KBM-7 (cell line): ENCODE measurements at regions of chr17 and their contacts with region 1.

Region 1: GRCh38 chr17:62968445-62968923 is 2.4 kb downstream of the TANC2 start:
- DNase-seq: peak; percentile 88

Region 2: GRCh38 chr17:62703775-62704378 is 264.6 kb before region 1 on chr17:
- in situ Hi-C with region 1: loop called (anchors 25 kb)
- DNase-seq: peak; percentile 77